ENCODE measurements at regions of chr6 and their contacts with region 1.

Region 1: GRCh38 chr6:5764401-5764955 is 242.2 kb downstream of the NRN1 start:
- DNase-seq: peak in 9 of 10 donors; percentile 62 to 89 (median 68)
- H3K4me3 ChIP-seq: peak overlapping the region in 46 of 59 donors; percentile 1 to 62 (median 28)
- H3K27ac ChIP-seq: peak overlapping the region in 56 of 59 donors; percentile 1 to 91 (median 70)
- H3K27me3 ChIP-seq: no peaks in the 10 kb centered on the region
- CTCF ChIP-seq: no peak

Region 2: DNA sequence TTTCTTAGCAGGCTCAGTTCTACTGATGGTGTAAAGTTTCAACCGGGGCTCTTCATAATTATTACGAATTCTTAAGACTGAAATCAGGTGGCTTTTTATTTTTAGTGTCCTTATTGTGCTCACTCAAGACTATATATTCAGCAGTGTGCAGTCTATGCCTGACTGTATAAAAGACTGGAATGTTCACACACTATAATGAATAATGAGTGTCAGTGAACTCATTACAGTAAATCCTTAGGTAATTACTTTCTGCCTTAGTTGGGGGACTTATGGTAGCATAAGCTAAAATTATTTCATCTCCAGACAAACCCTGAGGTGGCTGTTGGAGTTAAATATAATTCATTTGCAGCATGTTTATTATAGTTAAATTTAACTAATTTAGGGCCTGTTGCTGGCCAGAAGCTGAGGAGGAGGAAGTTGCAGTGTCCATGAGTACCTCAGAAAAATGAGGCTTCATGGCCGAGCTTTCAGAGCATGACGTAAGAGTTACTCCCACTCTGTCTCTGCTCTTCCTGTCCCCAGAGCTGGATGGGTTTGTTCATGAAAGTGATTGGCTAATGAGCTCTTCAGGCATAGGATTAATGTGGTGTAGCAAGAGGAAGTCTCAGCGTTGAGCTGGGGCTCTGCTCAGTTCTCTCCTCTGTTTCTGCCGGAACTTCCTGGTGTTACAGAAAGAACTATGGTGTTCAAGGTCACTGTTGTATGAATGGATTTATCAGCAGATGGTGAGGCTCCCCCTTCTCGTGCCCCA is 93.5 kb before region 1 on chr6:
- intact Hi-C with region 1: loop called in 1 of 2 experiments (anchors 2 kb)
- DNase-seq: peak in 2 of 10 donors; percentile 44 to 59
- H3K4me3 ChIP-seq: peak overlapping the region in 27 of 59 donors; percentile 1 to 48 (median 22)
- H3K27ac ChIP-seq: peak overlapping the region in 53 of 59 donors; percentile 3 to 87 (median 71)
- H3K27me3 ChIP-seq: no peaks in the 10 kb centered on the region
- CTCF ChIP-seq: no peak

Region 3: DNA sequence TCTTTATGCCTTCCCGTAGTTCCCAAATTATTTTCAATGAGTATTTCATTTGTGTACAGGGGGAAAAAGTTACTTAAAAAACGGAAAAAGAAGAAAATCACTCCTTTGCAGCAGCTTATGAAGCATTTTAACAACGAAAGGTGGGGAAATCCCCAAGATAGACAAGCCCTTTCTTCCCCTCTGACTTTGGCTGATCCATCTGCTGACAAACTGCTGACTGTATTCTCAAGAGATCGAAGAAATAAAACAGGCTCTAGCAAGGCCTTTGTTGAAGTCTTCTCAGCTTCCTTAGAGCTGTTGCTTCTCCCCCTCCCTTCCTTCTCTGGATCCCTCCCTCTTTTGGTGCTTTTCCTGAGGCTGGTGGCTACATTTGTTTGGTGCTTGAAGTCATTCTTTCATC is 83.0 kb before region 1 on chr6:
- intact Hi-C with region 1: no loop called
- DNase-seq: no peak
- H3K4me3 ChIP-seq: no peak overlapping the region
- H3K27ac ChIP-seq: no peak overlapping the region
- H3K27me3 ChIP-seq: no peaks in the 10 kb centered on the region
- CTCF ChIP-seq: no peak

Region 4: GRCh38 chr6:5981126-5982026 is 216.9 kb after region 1 on chr6:
- intact Hi-C with region 1: no loop called
- DNase-seq: no peak
- H3K4me3 ChIP-seq: no peak overlapping the region
- H3K27ac ChIP-seq: no peak overlapping the region
- H3K27me3 ChIP-seq: peaks cover 0 to 5% (median 0%) of the 10 kb centered on the region in 45 donors
- CTCF ChIP-seq: no peak

Region 5: DNA sequence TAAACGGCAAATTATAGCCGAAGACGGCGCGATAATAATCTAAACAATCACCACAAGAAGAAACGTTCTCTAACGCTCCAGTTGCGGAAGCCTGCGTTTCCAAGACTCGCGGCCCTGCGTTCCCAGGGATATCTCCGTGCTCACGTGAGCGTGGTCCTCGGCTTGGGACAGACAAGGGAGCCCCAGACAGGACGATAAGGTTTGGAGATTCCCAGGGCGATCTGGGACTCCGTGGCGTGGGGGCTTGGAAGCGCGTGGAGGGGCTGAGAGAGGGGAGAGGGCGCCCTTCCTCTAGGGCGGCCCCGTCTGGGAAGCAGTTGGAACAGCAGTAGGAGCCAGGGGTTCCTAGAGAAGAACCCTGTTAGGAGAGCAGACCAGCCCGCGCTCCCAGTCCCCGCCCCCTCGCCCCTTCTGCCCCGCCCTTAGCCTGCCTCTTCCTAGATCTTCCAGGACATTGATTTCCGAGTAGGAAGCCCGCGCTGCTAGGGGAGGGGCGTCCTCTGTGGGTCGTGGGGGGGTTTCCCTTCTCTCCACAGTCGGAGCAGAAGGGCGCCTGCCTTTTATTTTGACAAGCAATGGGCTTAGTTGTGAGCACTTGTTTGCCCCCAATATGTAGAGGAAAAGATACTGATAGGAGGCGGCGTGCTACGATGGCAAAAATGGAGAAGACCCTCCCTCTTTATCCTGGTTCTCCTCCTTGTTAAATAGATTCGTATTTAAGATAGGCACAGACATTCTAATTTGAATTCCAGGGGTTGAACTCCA is 231.7 kb after region 1 on chr6:
- intact Hi-C with region 1: loop called in 1 of 2 experiments (anchors 5 kb)
- DNase-seq: peak in 6 of 10 donors; percentile 50 to 84 (median 64)
- H3K4me3 ChIP-seq: peak overlapping the region; percentile 26 to 77 (median 58)
- H3K27ac ChIP-seq: peak overlapping the region in 56 of 59 donors; percentile 10 to 96 (median 75)
- H3K27me3 ChIP-seq: peaks cover 4 to 89% (median 67%) of the 10 kb centered on the region in 45 donors
- CTCF ChIP-seq: peak in 26 of 56 donors; percentile 2 to 36 (median 20)